Endothelial cell of umbilical vein (primary cell): ENCODE measurements at regions of chr5 and their contacts with region 1.

Region 1: DNA sequence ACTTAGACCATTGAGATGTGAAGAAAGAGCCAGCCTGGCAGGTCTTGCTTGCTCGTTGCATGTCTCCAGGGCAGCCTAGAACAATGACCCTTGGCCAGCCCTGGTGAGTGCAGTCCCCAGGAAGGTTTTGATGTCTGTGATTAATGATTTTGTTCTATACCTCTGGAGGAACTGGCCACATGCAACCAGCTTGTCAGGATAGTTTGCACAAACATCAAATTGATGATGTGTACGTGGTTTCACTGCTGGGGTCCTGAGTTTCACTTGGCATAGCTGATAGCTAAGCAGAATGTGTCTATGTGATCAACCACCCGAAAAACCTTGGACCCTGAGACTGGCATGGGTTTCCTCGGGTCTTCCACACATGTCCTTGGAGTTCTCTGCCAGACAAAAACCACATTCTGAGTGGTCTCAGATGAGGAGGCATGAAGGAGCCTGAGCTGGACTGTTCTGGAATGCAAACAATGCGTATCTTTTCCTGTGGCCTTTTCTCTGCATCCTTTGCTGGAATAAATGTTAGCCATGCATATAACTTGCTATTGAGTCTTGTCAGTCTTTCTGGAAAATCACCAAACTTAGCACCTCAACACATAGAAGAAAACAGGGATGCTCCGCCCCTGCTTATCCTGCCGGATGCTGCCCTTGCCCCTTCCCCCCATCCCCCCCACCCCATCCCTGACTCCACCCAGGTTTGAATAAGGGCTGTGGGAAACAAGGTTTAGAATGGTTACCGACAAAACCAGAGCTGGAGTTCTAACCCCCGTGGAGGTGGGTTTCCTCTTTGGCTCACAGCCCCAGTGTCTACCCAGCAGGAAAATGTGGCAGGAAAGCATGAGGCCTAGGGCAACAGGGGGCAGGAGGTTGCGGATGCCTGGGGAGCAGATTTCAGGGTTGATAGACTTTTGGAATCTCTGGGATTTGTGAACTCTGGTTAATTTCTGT is 50.1 kb upstream of the ANKRD33B start:
- DNase-seq: peak; percentile 96
- H3K4me3 ChIP-seq: no peak overlapping the region
- H3K27ac ChIP-seq: peak overlapping the region; percentile 85
- H3K4me1 ChIP-seq: peaks cover 20% of the 10 kb centered on the region
- H3K27me3 ChIP-seq: no peaks in the 10 kb centered on the region
- CTCF ChIP-seq: no peak
- POLR2A ChIP-seq: peak; percentile 58

Region 2: GRCh38 chr5:10467240-10468198 is 46.3 kb before region 1 on chr5:
- CTCF ChIA-PET with region 1: no interaction called
- POLR2A ChIA-PET with region 1: interaction called, 3 read pairs
- dilution Hi-C with region 1: no loop called
- intact Hi-C with region 1: loop called (anchors 2 kb)
- DNase-seq: peak; percentile 80
- H3K4me3 ChIP-seq: peak overlapping the region in 1 of 3 experiments; percentile 23
- H3K27ac ChIP-seq: peak overlapping the region; percentile 66
- H3K4me1 ChIP-seq: peaks cover 17% of the 10 kb centered on the region
- H3K27me3 ChIP-seq: no peaks in the 10 kb centered on the region
- CTCF ChIP-seq: no peak
- POLR2A ChIP-seq: no peak

Region 3: DNA sequence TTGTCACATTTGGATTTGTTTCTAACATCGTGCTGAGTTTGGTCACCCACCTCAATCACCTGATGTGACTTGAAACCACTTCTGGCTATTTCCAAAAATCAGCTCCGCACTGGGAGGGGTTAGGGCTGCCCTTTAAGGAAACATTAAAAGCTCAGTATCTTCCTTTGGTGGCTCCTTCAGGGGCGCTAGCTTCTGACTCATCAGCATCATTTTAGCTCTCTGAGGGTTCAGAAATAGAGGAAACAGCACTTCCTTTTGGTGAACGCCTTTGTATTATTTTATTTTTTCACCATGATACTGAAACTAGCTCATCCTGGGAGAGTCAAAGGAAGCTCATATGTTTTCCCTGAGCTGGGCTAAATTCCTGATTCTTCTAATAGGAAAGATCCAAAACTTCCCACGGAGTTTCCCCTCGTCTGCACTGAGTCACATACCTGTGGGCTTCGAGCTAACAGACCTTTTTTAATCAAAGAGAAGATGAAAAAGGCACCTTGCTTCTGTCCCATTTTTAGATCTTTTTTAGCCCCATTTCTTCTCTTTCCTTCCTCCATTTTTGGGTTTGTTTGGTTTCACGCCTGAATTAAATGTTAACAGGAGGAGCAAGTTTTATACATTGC is 23.9 kb before region 1 on chr5:
- CTCF ChIA-PET with region 1: interaction called, 6 read pairs
- POLR2A ChIA-PET with region 1: no interaction called
- dilution Hi-C with region 1: no loop called
- intact Hi-C with region 1: loop called (anchors 1 kb)
- DNase-seq: peak; percentile 46
- H3K4me3 ChIP-seq: no peak overlapping the region
- H3K27ac ChIP-seq: no peak overlapping the region
- H3K4me1 ChIP-seq: peaks cover 10% of the 10 kb centered on the region
- H3K27me3 ChIP-seq: no peaks in the 10 kb centered on the region
- CTCF ChIP-seq: no peak
- POLR2A ChIP-seq: no peak

Region 4: DNA sequence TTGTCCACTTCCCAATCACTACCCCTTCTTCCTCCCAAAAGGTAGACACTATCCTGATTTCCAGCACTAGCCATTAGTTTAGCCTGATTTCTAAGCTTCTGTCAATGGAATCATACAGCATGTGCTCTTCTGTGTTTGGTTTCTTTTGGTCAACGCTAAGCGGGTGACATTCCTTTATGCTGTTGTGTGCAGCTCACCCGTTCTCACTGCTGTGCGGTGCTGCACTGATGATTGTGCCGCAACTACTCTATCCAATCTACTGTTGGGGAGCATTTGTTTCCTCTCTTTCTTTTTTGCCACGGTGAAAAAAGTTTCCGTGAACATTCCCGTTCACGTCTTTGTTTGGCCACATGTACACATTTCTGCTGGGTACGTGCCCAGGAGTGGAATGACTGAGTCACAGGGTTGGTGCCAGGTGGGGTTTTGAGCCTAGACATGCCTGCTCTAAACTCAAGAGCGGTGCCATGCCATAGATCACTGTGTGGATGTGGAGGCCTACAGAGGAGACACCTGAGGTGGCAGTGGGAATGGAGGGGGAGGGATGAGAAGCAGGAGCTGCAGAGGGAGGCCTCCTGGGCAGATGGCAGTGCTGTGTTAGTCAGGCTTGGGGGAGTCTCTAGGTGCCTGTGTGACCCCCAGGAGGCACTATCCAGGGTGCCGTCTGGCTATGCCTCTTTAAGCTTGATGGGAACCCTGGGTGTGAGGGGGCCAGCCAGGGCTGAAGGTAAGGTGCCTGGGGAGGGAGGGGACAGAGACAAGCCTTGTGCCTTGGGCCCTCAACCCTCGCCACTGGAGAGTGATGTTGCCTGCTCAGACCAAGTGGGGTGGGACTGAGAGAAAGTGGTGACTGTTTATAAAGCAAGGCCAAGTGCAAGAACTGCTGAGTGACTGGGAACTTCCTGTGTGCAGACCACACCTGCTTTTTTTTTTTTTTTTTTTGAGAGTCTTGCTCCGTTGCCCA is 38.7 kb after region 1 on chr5:
- CTCF ChIA-PET with region 1: interaction called, 9 read pairs
- POLR2A ChIA-PET with region 1: interaction called, 4 read pairs
- dilution Hi-C with region 1: no loop called
- intact Hi-C with region 1: loop called (anchors 1 kb)
- DNase-seq: peak; percentile 44
- H3K4me3 ChIP-seq: no peak overlapping the region
- H3K27ac ChIP-seq: peak overlapping the region; percentile 87
- H3K4me1 ChIP-seq: peaks cover 33% of the 10 kb centered on the region
- H3K27me3 ChIP-seq: no peaks in the 10 kb centered on the region
- CTCF ChIP-seq: no peak
- POLR2A ChIP-seq: no peak

Region 5: DNA sequence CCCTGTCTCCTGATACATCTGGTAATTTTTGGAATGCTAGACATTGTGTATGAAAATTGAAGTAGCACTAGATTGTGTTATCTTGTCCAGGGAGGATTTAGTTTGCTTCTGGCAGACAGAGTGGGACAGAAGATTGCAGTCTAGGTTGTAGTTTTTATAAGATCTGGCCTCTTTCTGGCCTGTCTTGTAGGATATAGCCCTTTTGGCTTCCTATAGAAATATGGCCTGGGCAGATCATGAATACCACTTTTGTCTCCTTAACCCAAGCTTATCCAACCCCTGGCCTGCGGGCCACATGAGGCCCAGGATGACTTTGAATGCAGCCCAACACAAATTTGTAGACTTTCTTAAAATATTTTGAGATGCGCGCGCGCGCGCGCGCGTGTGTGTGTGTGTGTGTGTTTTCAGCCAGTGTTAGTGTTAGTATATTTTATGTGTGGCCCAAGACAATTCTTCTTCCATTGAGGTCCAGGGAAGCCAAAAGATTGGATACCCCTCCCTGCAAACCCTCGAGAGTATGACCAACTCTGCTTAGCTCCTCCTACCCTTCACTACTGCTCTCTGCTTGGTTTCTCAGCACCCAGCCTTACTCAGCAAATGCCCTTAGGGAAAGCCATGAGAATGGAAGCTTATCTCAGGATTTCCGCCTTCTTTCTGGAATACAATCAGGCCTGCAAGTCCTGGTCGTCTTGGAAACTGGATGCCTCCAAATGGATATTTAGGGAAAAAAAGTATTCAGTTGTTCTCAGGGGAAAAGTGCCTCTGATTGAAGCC is 76.6 kb after region 1 on chr5:
- CTCF ChIA-PET with region 1: interaction called, 3 read pairs
- POLR2A ChIA-PET with region 1: no interaction called
- dilution Hi-C with region 1: no loop called
- intact Hi-C with region 1: loop called (anchors 2 kb)
- DNase-seq: peak; percentile 97
- H3K4me3 ChIP-seq: no peak overlapping the region
- H3K27ac ChIP-seq: peak overlapping the region; percentile 49
- H3K4me1 ChIP-seq: peaks cover 27% of the 10 kb centered on the region
- H3K27me3 ChIP-seq: no peaks in the 10 kb centered on the region
- CTCF ChIP-seq: no peak
- POLR2A ChIP-seq: no peak